ENCODE measurements at regions of chr16 and their contacts with region 1.

Region 1: DNA sequence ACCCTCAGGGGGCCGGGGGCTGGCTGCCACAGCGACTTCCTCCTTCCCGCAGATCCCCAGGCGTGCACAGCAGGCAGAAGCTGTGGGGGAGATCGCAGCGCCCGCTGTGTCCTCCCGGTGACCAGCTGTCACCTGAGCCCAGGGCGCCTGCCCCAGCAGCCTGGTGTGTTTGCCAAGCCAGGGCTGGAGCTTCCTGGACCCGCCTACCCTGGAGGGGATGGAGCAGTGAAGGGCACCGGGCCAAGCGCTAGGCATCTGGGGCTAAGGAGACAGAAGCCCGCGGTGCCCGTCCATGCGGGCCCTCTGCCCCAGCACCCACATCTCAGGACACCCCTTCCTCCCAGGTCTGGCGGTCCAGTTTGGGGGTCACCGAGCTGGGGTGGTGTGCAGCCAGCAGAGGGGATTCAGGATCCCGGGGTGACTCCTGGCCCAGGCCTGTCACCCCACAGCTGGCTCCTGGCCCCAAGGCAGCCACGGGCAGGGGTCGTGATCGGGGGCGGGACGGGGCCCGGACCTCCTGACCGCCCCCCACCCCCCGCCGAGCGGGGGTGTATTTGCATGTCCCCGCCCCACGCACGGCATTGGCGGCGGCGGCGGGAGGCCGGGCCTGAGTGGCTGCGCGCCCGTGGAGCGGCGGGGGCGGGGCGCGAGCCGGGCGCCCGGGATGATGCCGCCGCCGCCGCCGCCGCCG is at the start of gene RAB26:
- DNase-seq: peak; percentile 81 to 94 (median 91)
- ATAC-seq: peak; percentile 78 to 85
- H3K4me3 ChIP-seq: peak within 1 kb of the TSS; percentile 55
- H3K27ac ChIP-seq: peak within 1 kb of the TSS; percentile 10
- H3K4me1 ChIP-seq: peaks cover 5% of the 10 kb centered on the region
- H3K27me3 ChIP-seq: no peaks in the 10 kb centered on the region
- total RNA-seq, gene RAB26: 0.24 to 0.89 (median 0.88) TPM in 3 of 4 donors, not detected in the other

Region 2: GRCh38 chr16:2003827-2004641 is 144.1 kb before region 1 on chr16:
- intact Hi-C with region 1: loop called in 1 of 4 experiments (anchors 5 kb)
- DNase-seq: peak; percentile 92 to 97 (median 96)
- ATAC-seq: peak; percentile 80 to 82
- H3K4me3 ChIP-seq: no peak overlapping the region
- H3K27ac ChIP-seq: no peak overlapping the region
- H3K4me1 ChIP-seq: peaks cover 12% of the 10 kb centered on the region
- H3K27me3 ChIP-seq: no peaks in the 10 kb centered on the region

Region 3: DNA sequence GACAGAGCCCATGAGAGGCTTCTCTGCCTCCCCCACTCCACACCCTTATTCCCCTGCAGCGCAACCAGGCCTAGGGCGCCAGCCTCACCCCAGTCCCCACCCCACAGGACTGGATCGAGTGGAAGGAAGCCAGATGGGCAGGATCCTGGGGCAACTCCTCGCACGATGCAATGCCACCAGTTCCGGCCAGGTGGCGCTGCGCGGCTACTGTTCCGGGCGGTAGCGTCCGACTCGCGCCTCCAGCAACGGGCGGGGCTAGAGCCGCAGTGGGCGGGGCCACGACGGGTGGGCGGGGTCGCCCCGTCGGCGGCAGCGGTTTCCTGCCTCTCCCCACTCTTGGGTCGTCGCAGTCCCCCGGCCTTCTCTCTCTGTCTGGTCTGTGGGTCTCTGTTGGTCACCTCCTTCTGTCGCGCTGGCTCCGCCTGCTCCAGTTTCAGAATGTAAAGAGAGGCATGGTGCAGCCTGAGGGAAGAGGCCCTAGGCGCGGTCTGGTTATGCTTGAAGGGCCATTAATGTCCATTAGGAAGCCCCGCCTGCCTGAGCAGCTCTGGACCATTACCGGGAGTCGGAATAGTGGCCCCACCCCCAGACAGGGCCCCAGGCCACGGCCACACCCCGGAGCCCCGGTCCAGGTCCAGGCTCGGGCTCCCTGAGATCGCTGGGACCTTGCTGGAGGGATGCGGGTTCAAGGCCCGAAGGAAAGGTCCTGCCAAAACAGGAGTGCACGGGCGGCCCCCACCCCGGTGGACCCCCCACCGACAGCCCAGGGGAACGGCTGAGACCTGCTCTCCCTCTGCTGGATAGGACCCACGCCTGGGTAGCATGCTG is 124.8 kb before region 1 on chr16:
- intact Hi-C with region 1: loop called in 3 of 4 experiments (anchors 5 to 10 kb)
- DNase-seq: peak; percentile 91 to 98 (median 97)
- ATAC-seq: peak; percentile 90
- H3K4me3 ChIP-seq: peak overlapping the region; percentile 8
- H3K27ac ChIP-seq: peak overlapping the region; percentile 71
- H3K4me1 ChIP-seq: peaks cover 5% of the 10 kb centered on the region
- H3K27me3 ChIP-seq: no peaks in the 10 kb centered on the region

Region 4: GRCh38 chr16:2236337-2237101 is 88.4 kb after region 1 on chr16 and contains the start of gene DNASE1L2:
- intact Hi-C with region 1: no loop called
- DNase-seq: peak; percentile 50 to 79 (median 76)
- ATAC-seq: peak; percentile 22 to 41
- H3K4me3 ChIP-seq: no peak within 1 kb of the TSS
- H3K27ac ChIP-seq: no peak within 1 kb of the TSS
- H3K4me1 ChIP-seq: peaks cover 3% of the 10 kb centered on the region
- H3K27me3 ChIP-seq: no peaks in the 10 kb centered on the region
- total RNA-seq, gene DNASE1L2: 0.17 to 0.43 (median 0.33) TPM

Measured in right cardiac atrium (tissue), 5 donors.